Natural killer cell (primary cell): ENCODE measurements at regions of chr6 and their contacts with region 1.

Region 1: DNA sequence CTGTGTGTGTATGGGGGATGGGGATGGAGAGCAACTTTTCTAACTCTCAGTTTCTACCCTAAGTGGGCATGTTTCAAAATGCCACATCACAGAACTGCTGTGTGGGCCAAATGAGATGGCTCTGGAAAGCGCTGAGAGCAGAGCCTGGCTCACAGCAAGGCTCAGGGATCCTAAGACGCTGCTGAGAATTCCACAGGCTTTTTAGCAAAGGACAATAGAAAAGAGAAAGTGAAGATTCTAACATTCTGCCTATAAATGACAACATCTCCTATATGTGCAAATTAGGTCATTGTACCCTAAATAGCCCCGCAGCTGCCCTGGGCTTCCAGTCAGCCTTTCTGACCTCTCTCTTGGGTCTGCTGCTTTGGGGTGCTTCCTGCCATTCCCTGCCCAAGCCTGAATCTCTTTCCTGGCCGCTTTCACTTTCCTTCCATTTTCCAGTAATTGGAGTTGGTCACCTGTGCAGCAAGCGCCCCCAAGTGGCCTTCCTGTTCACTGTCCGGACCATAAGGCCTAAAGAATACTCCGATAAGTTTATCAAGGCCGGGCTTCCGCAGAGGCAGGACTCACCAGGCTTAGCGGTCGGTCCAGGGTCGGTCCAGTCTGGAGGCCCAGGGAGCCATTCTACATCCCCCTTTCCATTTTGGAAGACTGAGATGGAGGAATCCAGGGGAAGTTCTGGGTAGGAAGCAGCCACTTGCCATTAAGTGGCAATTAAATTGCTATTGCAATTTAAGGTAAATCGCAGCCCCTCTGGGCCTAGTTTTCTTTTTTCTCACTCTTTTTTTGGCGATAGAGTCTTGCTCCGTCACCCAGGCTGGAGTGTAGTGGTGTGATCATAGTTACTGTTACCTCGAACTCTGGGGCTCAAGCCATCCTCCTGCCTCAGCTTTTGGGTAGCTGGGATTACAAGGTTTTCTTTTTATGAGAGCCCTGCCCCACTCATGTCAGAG is 6.6 kb upstream of the DDR1 start:
- DNase-seq: peak; percentile 57 to 87
- ATAC-seq: peak; percentile 85 to 94 (median 86)
- H3K4me3 ChIP-seq: no peak overlapping the region
- H3K4me3 Mint-ChIP-seq: peak overlapping the region; percentile 81
- H3K27ac ChIP-seq: no peak overlapping the region
- H3K27ac Mint-ChIP-seq: peak overlapping the region; percentile 4 to 17
- H3K4me1 ChIP-seq: peaks cover 12% of the 10 kb centered on the region
- H3K4me1 Mint-ChIP-seq: peaks cover 8 to 9% of the 10 kb centered on the region in 2 donors
- H3K27me3 ChIP-seq: no peaks in the 10 kb centered on the region
- H3K27me3 Mint-ChIP-seq: peaks cover 0 to 4% of the 10 kb centered on the region in 2 donors
- CTCF ChIP-seq: peak; percentile 77

Region 2: DNA sequence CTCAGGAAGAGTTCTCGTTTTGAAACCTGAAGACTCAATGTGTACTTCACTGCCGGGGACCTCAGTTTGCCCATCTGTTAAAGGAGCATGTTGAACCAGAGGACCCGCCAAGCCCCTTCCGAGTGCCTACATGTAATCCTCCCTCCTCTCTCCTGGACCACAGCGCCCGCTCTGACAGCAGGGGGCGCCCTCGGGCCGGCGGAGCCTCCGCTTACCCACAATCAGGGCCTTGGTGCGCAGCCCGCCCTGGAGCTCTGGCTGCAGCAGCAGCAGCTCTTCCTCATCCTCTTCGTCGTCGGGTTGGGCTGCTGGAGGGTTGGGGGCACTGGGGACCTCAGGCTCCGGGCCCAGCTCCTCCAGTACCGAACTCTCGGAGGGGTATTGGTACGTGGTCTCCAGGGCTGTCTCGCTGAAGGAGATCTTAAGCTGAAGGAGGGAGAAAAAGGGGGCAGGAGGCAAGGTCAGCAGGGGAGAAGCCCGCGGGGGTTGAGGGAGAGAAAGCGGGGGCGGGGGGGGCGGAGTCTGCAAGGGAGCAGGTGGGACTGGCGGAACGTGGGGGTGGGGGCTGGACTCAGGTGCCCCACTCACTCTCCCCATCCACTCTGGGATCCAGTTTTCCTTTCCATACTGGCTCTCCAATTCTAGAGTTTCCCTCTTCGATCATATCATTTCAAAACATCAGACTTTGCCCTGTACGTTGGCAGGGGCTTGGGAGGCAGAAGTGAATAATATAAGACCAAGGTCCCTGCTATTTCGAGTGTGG is 198.6 kb before region 1 on chr6:
- intact Hi-C with region 1: loop called (anchors 5 kb)
- DNase-seq: peak; percentile 94 to 95
- ATAC-seq: peak; percentile 35 to 69 (median 48)
- H3K4me3 ChIP-seq: peak overlapping the region; percentile 15
- H3K4me3 Mint-ChIP-seq: peak overlapping the region; percentile 79
- H3K27ac ChIP-seq: peak overlapping the region; percentile 59
- H3K27ac Mint-ChIP-seq: peak overlapping the region; percentile 91 to 98
- H3K4me1 ChIP-seq: peaks cover 47% of the 10 kb centered on the region
- H3K4me1 Mint-ChIP-seq: peaks cover 45 to 65% of the 10 kb centered on the region in 2 donors
- H3K27me3 ChIP-seq: no peaks in the 10 kb centered on the region
- H3K27me3 Mint-ChIP-seq: no peaks in the 10 kb centered on the region
- CTCF ChIP-seq: peak; percentile 95

Region 3: DNA sequence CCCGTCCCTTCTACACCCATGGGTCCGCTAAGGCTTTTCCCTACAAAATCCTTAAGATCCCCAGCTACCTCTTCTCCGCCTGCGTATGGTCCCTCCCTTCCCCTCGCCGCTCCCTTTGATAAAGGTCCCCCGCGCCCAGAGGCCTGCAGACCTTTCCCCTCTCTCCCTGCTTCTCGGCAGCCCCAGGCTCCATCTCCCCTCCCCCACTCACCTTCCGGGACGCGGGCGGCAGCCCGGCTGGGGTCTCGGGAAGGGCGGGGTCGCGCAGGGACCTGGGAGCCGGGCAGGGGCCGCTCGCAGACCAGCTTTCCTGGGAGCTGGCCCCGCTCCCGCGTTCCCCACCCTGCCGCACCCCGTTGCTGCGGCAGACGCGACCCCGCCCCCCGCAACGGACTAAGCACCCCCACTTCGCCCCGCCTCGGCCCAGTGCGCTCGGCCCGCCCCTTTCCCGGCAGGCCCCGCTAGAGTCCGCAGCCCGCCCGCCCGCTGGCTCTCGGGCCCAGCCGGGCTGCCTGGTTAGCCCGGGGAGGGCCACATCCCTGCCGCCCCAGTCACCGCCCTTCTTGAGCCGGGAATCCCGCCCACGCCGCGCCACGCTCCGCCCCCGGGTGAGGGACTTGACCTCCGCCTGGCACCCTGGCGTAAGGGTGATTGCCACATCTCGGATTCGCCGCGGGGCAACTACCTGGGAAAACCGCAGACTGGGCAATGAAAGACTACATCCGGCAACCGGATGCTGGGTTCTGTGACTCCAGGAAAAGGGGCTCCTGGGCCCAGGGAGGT is 135.2 kb before region 1 on chr6 and contains the start of gene FLOT1:
- intact Hi-C with region 1: loop called (anchors 1 kb)
- DNase-seq: peak; percentile 90 to 92
- ATAC-seq: peak; percentile 78 to 90 (median 78)
- H3K4me3 ChIP-seq: peak within 1 kb of the TSS; percentile 72
- H3K4me3 Mint-ChIP-seq: peak within 1 kb of the TSS; percentile 95
- H3K27ac ChIP-seq: peak within 1 kb of the TSS; percentile 84
- H3K27ac Mint-ChIP-seq: peak within 1 kb of the TSS; percentile 94 to 96
- H3K4me1 ChIP-seq: peaks cover 54% of the 10 kb centered on the region
- H3K4me1 Mint-ChIP-seq: peaks cover 50 to 65% of the 10 kb centered on the region in 2 donors
- H3K27me3 ChIP-seq: no peaks in the 10 kb centered on the region
- H3K27me3 Mint-ChIP-seq: no peaks in the 10 kb centered on the region
- CTCF ChIP-seq: no peak
- total RNA-seq, gene FLOT1: 73.1 to 113 (median 94.2) TPM

Region 4: DNA sequence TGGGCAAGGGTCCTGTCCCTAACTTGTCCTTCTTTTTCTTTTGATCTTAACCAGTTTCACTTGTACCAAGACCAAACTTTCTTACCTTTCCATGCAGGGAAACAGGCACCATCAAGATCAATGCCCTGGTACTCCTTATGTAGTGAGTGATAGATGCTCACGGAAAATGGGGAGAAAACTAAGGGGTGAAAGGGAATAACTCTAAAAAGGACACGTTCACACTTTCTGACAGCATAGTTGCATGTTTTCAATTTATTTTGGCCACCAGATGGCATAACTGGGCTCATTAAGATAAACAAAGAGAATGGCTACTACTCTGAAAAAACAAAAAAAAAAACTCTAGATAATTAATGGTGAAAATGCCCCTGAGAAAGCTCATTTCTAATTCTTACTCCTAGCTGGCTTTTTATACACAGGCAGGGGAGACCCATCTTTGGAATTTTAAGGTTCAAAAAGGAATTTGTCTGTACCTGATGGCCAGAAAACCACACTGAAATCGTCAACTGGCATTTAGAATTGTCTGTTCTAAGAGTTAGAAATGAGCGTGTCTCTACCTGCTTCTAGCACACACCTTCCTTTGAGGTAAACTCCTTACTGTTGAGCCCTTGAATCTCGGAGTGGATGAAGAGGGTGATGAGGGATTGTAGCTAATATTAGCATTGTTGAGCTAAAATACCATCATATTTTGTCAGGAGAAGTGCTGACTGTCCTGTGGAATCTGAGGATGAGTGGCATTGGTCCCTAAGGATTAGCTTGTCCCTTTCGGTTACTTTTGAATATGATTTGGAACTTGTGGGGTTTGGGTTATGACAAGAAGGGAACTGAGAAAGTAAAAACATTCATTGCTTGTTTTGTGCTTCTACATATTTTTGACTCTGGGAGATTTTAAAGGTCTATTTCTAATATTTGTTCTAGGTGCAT is 55.6 kb before region 1 on chr6:
- intact Hi-C with region 1: loop called (anchors 1 kb)
- DNase-seq: peak in 1 of 2 donors; percentile 68
- ATAC-seq: no peak
- H3K4me3 ChIP-seq: no peak overlapping the region
- H3K4me3 Mint-ChIP-seq: no peak overlapping the region
- H3K27ac ChIP-seq: no peak overlapping the region
- H3K27ac Mint-ChIP-seq: no peak overlapping the region
- H3K4me1 ChIP-seq: peaks cover 3% of the 10 kb centered on the region
- H3K4me1 Mint-ChIP-seq: peaks cover 2 to 23% of the 10 kb centered on the region in 2 donors
- H3K27me3 ChIP-seq: no peaks in the 10 kb centered on the region
- H3K27me3 Mint-ChIP-seq: peaks cover 0 to 11% of the 10 kb centered on the region in 2 donors
- CTCF ChIP-seq: peak; percentile 60

Region 5: GRCh38 chr6:30828027-30828960 is 49.4 kb before region 1 on chr6:
- intact Hi-C with region 1: loop called (anchors 1 kb)
- DNase-seq: peak; percentile 62 to 87
- ATAC-seq: peak; percentile 80 to 89 (median 84)
- H3K4me3 ChIP-seq: peak overlapping the region; percentile 42
- H3K4me3 Mint-ChIP-seq: peak overlapping the region; percentile 91
- H3K27ac ChIP-seq: peak overlapping the region; percentile 9
- H3K27ac Mint-ChIP-seq: peak overlapping the region in 1 of 2 donors; percentile 79
- H3K4me1 ChIP-seq: peaks cover 43% of the 10 kb centered on the region
- H3K4me1 Mint-ChIP-seq: peaks cover 6 to 50% of the 10 kb centered on the region in 2 donors
- H3K27me3 ChIP-seq: no peaks in the 10 kb centered on the region
- H3K27me3 Mint-ChIP-seq: peaks cover 0 to 20% of the 10 kb centered on the region in 2 donors
- CTCF ChIP-seq: peak; percentile 90